ENCODE measurements at regions of chr6 and their contacts with region 1.

Region 1: DNA sequence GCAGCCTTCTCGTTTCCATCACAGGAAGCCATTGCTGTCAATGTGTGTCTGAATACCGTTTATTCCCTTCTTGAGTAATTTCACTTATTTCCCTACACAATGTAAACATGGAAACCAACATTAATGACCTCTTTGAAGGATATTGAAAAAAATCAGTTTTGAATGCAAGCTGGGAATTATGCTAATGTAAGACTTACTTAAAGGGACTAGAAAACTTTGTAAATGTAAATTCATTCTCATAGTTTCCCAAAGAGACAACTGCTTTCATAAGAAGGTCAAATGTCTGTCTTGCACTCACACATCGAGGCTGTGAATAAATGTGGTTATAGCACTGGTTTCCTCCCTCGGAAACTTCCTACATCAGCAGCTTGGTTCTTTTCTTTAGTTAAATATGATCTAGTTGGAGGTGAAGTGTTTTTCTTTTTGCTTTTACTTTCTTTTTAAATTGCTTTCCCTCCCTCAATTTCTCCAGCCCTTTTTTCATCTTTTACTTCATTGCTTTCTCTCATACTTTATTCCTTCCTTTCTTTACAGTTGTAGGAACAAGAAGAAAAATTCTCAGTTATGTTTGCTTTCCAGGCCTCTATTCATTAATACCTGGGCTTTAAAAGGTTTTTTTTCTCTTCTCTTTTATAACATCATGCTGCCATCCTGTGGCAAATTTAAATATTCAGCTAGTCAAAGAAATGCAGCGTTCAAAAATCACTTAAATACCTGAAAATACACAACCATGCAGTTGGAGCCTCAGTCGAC is 108.3 kb downstream of the TNFAIP3 start:
- DNase-seq: peak; percentile 64
- ATAC-seq: peak; percentile 69
- H3K4me3 Mint-ChIP-seq: peak overlapping the region; percentile 70
- H3K27ac Mint-ChIP-seq: peak overlapping the region; percentile 94
- H3K4me1 Mint-ChIP-seq: peaks cover 70% of the 10 kb centered on the region
- H3K27me3 Mint-ChIP-seq: no peaks in the 10 kb centered on the region
- CTCF ChIP-seq: peak; percentile 82

Region 2: GRCh38 chr6:137903933-137904821 is 71.2 kb before region 1 on chr6:
- CTCF ChIA-PET with region 1: interaction called, 4 read pairs
- POLR2A ChIA-PET with region 1: no interaction called
- intact Hi-C with region 1: loop called (anchors 2 kb)
- DNase-seq: peak; percentile 78
- ATAC-seq: peak; percentile 67
- H3K4me3 Mint-ChIP-seq: peak overlapping the region; percentile 67
- H3K27ac Mint-ChIP-seq: peak overlapping the region; percentile 99
- H3K4me1 Mint-ChIP-seq: peaks cover 57% of the 10 kb centered on the region
- H3K27me3 Mint-ChIP-seq: no peaks in the 10 kb centered on the region
- CTCF ChIP-seq: no peak

Region 3: GRCh38 chr6:137933696-137934095 is 41.7 kb before region 1 on chr6:
- CTCF ChIA-PET with region 1: interaction called, 21 read pairs
- POLR2A ChIA-PET with region 1: no interaction called
- intact Hi-C with region 1: no loop called
- DNase-seq: no peak
- ATAC-seq: no peak
- H3K4me3 Mint-ChIP-seq: no peak overlapping the region
- H3K27ac Mint-ChIP-seq: peak overlapping the region; percentile 49
- H3K4me1 Mint-ChIP-seq: peaks cover 45% of the 10 kb centered on the region
- H3K27me3 Mint-ChIP-seq: no peaks in the 10 kb centered on the region
- CTCF ChIP-seq: no peak

Measured in activated CD8-positive, alpha-beta T cell treated with anti-CD3 and anti-CD28 coated beads for 36 hours (primary cell).